BJ (cell line): ENCODE measurements at regions of chr22 and their contacts with region 1.

Region 1: GRCh38 chr22:30634471-30635233 is 929 bp upstream of the SLC35E4 start:
- DNase-seq: no peak
- H3K4me3 ChIP-seq: no peak overlapping the region
- H3K27me3 ChIP-seq: no peaks in the 10 kb centered on the region
- CTCF ChIP-seq: peak; percentile 95

Region 2: GRCh38 chr22:30615543-30615954 is 19.1 kb before region 1 on chr22:
- CTCF ChIA-PET with region 1: interaction called, 13 read pairs
- POLR2A ChIA-PET with region 1: no interaction called
- DNase-seq: no peak
- H3K4me3 ChIP-seq: no peak overlapping the region
- H3K27me3 ChIP-seq: no peaks in the 10 kb centered on the region; the same call in 1 of the 2 replicates
- CTCF ChIP-seq: no peak

Region 3: GRCh38 chr22:30667494-30668385 is 33.1 kb after region 1 on chr22 and contains the start of gene DUSP18:
- CTCF ChIA-PET with region 1: interaction called, 13 read pairs
- POLR2A ChIA-PET with region 1: no interaction called
- DNase-seq: peak; percentile 38
- H3K4me3 ChIP-seq: peak within 1 kb of the TSS; percentile 75
- H3K27me3 ChIP-seq: no peaks in the 10 kb centered on the region
- CTCF ChIP-seq: peak; percentile 48
- polyA plus RNA-seq, gene DUSP18: 12.4 and 18.6 TPM in 2 replicates

Region 4: DNA sequence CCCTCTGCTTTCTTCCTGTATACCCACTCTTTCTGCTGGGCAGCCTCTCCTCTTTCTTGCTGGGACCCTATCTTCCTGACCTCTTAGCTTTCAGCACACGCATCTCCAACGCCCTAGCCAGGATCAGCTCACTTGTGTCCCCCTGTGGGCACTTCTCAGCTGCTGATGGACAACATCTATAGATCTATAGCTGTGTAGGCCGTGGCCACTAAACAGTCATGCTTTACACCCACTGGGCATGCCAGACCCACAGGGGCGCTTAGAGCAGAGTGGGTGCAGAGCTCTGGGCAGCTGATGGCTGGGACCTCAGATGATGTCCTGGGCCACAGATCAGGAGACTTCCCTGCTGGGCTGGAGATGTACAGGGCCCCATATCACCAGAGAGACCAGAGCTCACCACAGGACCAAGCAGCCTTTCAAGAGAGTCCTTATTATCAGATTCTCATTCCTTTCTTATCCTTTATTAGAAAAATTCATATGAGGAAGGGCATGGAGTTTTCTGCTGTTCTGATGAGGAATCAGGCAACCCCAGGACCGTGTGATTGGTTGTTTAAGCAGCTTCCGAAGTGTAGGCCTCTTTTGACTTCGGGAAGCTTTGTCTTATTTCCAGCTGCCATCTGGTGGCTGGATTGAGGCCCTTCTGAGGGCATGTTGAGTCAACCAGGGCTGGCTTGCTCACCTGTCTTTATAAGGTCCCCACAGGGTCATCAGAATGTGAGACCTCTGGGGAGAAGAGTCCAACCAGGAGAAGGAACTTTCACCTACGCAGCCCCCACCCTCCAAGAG is 120.5 kb after region 1 on chr22:
- CTCF ChIA-PET with region 1: interaction called, 282 read pairs
- POLR2A ChIA-PET with region 1: interaction called, 3 read pairs
- DNase-seq: peak; percentile 7
- H3K4me3 ChIP-seq: no peak overlapping the region
- H3K27me3 ChIP-seq: no peaks in the 10 kb centered on the region; the same call in 1 of the 2 replicates
- CTCF ChIP-seq: peak; percentile 89